A673 (cell line): ENCODE measurements at regions of chr11 and their contacts with region 1.

Region 1: GRCh38 chr11:127345819-127346459 is 345.4 kb upstream of the KIRREL3 start:
- DNase-seq: peak; percentile 56
- H3K4me3 ChIP-seq: no peak overlapping the region
- H3K27ac ChIP-seq: no peak overlapping the region
- H3K4me1 ChIP-seq: no peaks in the 10 kb centered on the region
- H3K27me3 ChIP-seq: peaks cover 6% of the 10 kb centered on the region
- CTCF ChIP-seq: peak; percentile 91

Region 2: DNA sequence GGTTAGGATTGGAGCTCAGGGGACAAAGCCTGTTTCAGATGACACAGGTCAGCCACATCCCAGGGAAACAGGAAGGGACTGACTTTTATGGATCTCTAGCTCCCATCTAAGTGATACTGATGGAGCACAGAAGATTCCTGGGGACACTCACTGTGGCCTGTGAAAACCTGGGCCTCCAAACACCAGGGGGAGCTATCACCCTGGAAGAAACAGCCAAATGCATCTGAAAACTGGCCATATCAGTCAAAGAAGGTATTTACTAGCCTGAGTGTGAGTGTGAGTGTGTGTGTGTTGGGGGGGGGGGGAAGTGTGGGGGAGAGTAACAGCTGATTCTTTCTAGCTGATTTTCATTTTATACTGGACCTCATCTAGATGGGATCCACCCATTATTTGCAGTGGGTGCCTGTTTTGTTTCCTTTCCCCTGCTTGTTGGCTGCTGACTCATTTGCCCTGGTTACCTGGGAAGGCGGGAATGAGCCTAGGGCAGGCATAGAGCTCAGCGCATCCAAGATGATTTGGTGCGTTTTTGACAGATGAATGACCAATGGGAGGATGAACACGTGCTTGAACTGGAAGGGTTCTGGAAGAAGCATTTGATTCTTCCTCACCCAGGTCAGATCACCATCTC is 629.4 kb before region 1 on chr11:
- CTCF ChIA-PET with region 1: no interaction called
- POLR2A ChIA-PET with region 1: no interaction called
- intact Hi-C with region 1: loop called (anchors 5 kb)
- DNase-seq: peak; percentile 64
- H3K4me3 ChIP-seq: no peak overlapping the region
- H3K27ac ChIP-seq: no peak overlapping the region
- H3K4me1 ChIP-seq: no peaks in the 10 kb centered on the region
- H3K27me3 ChIP-seq: peaks cover 3% of the 10 kb centered on the region
- CTCF ChIP-seq: peak; percentile 79

Region 3: DNA sequence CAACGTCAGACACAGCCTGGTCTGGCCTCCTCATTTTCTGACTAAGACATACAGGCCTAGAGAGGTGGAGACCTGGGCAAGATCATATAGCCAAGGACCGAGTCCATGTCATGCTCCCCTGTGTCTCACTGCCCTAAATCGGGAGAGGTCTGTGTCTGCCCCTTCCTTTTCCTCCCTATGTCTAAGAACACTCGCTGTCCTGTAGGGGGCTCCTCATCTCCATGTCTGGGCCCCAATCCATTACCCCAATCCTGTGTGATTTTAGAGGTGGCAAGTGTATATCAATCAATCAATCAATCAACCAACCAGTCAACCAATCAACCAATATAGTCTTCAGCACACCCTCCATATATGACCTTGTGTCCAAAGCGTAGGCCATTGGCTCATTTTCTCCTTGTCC is 471.1 kb before region 1 on chr11:
- CTCF ChIA-PET with region 1: no interaction called
- POLR2A ChIA-PET with region 1: no interaction called
- intact Hi-C with region 1: loop called (anchors 10 kb)
- DNase-seq: peak; percentile 10
- H3K4me3 ChIP-seq: no peak overlapping the region
- H3K27ac ChIP-seq: no peak overlapping the region
- H3K4me1 ChIP-seq: no peaks in the 10 kb centered on the region
- H3K27me3 ChIP-seq: peaks cover 13% of the 10 kb centered on the region
- CTCF ChIP-seq: peak; percentile 54

Region 4: GRCh38 chr11:127003260-127003981 is 342.5 kb before region 1 on chr11:
- CTCF ChIA-PET with region 1: no interaction called
- POLR2A ChIA-PET with region 1: no interaction called
- intact Hi-C with region 1: loop called (anchors 10 kb)
- DNase-seq: peak; percentile 56
- H3K4me3 ChIP-seq: peak overlapping the region; percentile 11
- H3K27ac ChIP-seq: no peak overlapping the region
- H3K4me1 ChIP-seq: peaks cover 8% of the 10 kb centered on the region
- H3K27me3 ChIP-seq: peaks cover 85% of the 10 kb centered on the region
- CTCF ChIP-seq: peak; percentile 58

Region 5: GRCh38 chr11:127056338-127056971 is 289.5 kb before region 1 on chr11:
- CTCF ChIA-PET with region 1: no interaction called
- POLR2A ChIA-PET with region 1: no interaction called
- intact Hi-C with region 1: no loop called
- DNase-seq: peak; percentile 19
- H3K4me3 ChIP-seq: no peak overlapping the region
- H3K27ac ChIP-seq: no peak overlapping the region
- H3K4me1 ChIP-seq: no peaks in the 10 kb centered on the region
- H3K27me3 ChIP-seq: peaks cover 8% of the 10 kb centered on the region
- CTCF ChIP-seq: no peak